Psoas muscle (tissue), 8 donors: ENCODE measurements at regions of chr22 and their contacts with region 1.

Region 1: GRCh38 chr22:32874976-32875375 is 73.5 kb downstream of the TIMP3 start:
- DNase-seq: no peak
- ATAC-seq: no peak
- H3K4me3 ChIP-seq: no peak overlapping the region
- H3K27ac ChIP-seq: no peak overlapping the region
- H3K4me1 ChIP-seq: no peaks in the 10 kb centered on the region
- H3K27me3 ChIP-seq: peaks cover 0 to 11% (median 3%) of the 10 kb centered on the region in 3 donors
- CTCF ChIP-seq: no peak

Region 2: GRCh38 chr22:32810561-32811004 is 64.4 kb before region 1 on chr22:
- intact Hi-C with region 1: loop called in 1 of 2 experiments (anchors 10 kb)
- DNase-seq: no peak
- ATAC-seq: peak in 1 of 4 donors; percentile 36
- H3K4me3 ChIP-seq: no peak overlapping the region
- H3K27ac ChIP-seq: no peak overlapping the region
- H3K4me1 ChIP-seq: peaks cover 24% of the 10 kb centered on the region
- H3K27me3 ChIP-seq: no peaks in the 10 kb centered on the region
- CTCF ChIP-seq: no peak